ENCODE measurements at regions of chr3 and their contacts with region 1.

Region 1: GRCh38 chr3:138118612-138119422 is 3.4 kb upstream of the DZIP1L start:
- H3K4me3 ChIP-seq: no peak overlapping the region
- H3K27ac ChIP-seq: no peak overlapping the region
- H3K4me1 ChIP-seq: no peaks in the 10 kb centered on the region
- CTCF ChIP-seq: peak; percentile 42

Region 2: DNA sequence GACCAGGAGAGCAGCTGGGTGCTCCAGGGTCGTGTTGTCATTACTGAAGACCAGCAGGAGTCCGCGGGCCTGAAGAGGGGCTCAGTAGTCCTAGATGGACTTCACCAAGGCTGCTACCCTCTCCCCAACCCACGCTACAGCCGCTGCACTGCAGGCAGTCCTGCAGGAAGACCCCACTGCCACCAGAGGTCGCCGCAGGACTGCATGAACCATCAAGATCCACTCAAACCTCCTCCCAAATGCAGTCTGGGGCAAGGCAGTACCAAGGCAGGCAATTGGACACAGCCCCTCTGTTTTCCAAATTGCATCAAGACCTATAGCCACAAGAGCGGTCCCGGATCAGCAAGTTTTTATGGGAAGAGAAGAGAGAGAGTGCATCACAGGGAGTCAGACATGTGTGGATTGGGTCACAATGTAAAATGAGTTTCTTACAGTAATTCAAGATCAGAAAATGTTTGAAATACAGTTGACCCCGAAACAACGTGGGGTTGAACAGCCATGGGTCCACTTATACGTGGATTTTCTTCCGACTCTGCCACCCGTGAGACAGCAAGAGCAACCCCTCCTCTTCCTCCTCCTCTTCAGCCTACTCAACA is 50.1 kb before region 1 on chr3:
- CTCF ChIA-PET with region 1: interaction called, 63 read pairs
- POLR2A ChIA-PET with region 1: no interaction called
- H3K4me3 ChIP-seq: no peak overlapping the region
- H3K27ac ChIP-seq: no peak overlapping the region
- H3K4me1 ChIP-seq: no peaks in the 10 kb centered on the region
- CTCF ChIP-seq: peak; percentile 89

Region 3: DNA sequence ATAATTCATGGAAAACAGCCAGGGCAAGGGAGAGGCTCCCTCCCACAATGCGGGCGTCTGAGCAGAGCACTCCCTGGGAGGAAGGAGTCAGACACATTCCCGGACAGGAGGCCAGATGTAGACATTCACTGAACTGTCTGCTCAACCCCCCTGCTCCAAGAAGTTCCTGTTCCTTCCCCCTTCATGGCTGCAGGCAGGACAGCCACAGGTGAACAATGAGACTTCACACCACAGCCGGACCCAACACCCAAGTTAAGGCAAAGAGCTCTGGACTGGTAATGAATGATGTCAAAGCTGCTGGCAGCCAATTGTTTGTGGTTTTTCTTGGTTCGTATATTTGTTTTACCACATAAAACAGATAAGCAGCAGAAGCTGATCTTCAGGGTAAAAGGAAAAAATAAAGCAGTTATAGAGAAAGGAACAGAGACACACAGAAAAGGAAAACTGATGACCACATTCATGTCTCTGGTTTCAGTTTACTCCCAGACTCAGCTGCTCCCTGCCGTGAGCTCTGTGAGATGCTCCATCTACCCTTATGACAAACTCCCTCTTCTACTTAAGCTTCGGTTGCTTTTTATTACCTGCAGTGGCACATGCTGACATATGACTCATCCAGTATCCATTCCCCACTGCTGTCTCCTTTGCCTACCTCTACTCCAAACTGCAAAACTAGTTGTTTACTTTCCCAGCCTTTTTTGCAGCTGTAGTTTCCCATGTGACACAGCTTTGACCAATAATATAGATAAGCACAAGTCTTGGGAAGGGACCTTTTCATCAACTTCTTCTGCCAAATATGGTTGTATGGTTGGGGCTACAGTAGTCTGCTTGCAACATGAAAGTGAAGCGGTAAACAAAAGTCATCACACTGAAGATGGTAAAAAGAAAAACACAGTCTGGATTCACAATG is 36.5 kb before region 1 on chr3:
- CTCF ChIA-PET with region 1: interaction called, 16 read pairs
- POLR2A ChIA-PET with region 1: interaction called, 10 read pairs
- H3K4me3 ChIP-seq: no peak overlapping the region
- H3K27ac ChIP-seq: peak overlapping the region; percentile 43; the same call in 1 of the 2 replicates
- H3K4me1 ChIP-seq: 0 out of 2 replicates have a peak, but pooled peaks cover 8% of the 10 kb centered on the region
- CTCF ChIP-seq: no peak

Region 4: DNA sequence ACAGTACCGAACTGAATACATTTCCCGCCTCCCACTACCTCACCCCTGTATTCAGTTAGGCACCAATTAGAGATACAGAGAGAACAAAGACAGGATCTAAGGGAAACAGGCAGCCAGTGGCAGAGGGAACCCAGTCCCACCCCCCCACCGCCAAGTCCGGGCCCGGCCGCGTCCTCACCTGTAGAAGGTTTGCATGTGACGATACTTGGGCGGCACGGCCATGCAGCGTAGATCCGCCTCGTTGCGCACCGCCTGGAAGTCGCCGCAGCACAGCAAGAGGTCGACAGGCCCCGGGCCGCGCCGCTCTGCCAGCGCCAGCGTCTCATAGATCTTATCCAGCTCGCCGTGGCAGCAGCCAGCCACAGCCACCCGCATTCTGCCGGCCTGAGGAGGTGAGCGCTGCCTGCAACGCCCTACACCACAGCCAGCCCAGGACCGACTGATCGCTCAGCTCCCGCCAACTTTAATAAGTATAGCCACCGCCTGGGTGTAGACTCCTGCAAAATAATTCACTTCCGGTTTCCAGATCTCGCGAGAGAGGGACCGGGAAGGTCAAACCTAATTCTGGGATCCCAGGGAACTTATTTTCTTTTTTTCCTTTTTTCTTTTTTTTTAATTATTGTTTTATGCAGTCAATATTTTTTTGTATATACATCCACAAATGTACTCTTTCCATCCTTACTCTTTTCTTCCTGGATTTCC is 55.8 kb after region 1 on chr3 and contains the start of gene DBR1:
- CTCF ChIA-PET with region 1: interaction called, 3 read pairs
- POLR2A ChIA-PET with region 1: interaction called, 13 read pairs
- H3K4me3 ChIP-seq: peak within 1 kb of the TSS; percentile 94
- H3K27ac ChIP-seq: peak within 1 kb of the TSS; percentile 76; the same call in 1 of the 2 replicates
- H3K4me1 ChIP-seq: no peaks in the 10 kb centered on the region
- CTCF ChIP-seq: peak; percentile 12; the same call in 1 of the 2 replicates

Region 5: DNA sequence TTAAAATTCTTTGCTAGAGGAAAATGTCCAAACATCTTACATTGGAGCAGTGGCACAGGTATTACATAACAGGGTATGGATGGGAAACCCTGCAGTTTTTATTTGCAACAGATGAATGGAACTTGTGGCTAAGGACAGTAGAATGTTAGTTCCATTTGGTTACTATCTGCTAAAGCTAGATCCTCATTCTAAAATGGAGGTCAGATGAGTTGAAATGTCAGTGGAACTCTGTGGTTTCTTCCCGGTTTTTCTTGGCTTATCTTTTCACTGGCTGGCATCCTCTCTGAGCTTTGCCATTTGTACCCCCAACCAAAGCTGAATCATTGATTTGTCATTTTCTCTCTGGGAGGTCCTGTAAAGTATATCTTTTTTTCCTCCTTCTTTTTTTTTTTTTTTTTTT is 137.2 kb after region 1 on chr3:
- CTCF ChIA-PET with region 1: no interaction called
- POLR2A ChIA-PET with region 1: no interaction called
- H3K4me3 ChIP-seq: no peak overlapping the region
- H3K27ac ChIP-seq: no peak overlapping the region
- H3K4me1 ChIP-seq: no peaks in the 10 kb centered on the region
- CTCF ChIP-seq: no peak